A549 (cell line): ENCODE measurements at regions of chr10 and their contacts with region 1.

Region 1: GRCh38 chr10:28663576-28664313 is 13.6 kb upstream of the BAMBI start:
- DNase-seq: peak; percentile 79 to 86
- ATAC-seq: peak; percentile 87 to 92
- H3K4me3 ChIP-seq: no peak overlapping the region
- H3K27ac ChIP-seq: peak overlapping the region; percentile 47 to 67; a peak in 5 of 6 replicates
- H3K4me1 ChIP-seq: peaks cover 28% of the 10 kb centered on the region
- CTCF ChIP-seq: peak; percentile 97
- EP300 ChIP-seq: no peak
- POLR2A ChIP-seq: no peak
- RAD21 ChIP-seq: peak; percentile 99

Region 2: DNA sequence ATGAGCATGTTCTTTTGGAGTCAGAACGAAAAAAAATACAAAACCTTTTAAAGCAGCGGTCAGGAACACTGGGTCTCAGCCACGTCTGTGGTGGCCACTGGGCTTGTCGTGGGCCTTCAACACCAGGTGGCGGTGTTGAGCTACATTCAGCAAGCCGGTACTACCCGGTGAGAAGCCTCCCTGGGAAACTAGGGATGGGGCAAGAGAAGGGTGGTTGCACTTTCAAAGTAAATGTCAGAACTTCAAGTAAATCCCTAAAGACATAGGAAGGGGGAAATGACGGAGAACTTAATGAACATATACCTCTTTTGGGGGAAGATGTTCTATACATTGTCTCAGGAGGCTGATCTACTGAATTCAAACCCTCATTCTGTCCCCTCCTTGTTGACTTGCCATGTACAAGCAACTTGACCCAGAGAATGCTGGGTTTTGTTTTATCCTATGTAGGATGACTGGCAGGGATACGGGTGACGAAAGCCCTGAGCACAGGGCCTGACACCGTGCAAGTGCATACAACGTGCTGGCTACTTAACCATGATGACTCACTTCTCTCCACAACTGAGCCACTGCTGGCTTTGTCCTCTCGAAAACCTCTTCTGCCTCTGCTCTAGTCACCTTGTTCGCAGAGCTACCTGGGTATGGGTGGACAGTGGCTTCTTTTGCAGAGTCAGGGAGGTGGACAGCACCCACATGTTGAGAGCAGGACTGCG is 35.4 kb before region 1 on chr10:
- CTCF ChIA-PET with region 1: interaction called, 14 read pairs
- POLR2A ChIA-PET with region 1: no interaction called
- DNase-seq: peak; percentile 80 to 84
- ATAC-seq: peak; percentile 89 to 92
- H3K4me3 ChIP-seq: no peak overlapping the region
- H3K27ac ChIP-seq: peak overlapping the region; percentile 26 to 55; a peak in 5 of 6 replicates
- H3K4me1 ChIP-seq: peaks cover 19% of the 10 kb centered on the region
- CTCF ChIP-seq: peak; percentile 96
- EP300 ChIP-seq: no peak
- POLR2A ChIP-seq: no peak
- RAD21 ChIP-seq: peak; percentile 92 to 97

Region 3: GRCh38 chr10:28652696-28653095 is 11.0 kb before region 1 on chr10:
- CTCF ChIA-PET with region 1: interaction called, 17 read pairs
- POLR2A ChIA-PET with region 1: no interaction called
- DNase-seq: no peak
- ATAC-seq: peak in 1 of 2 experiments; percentile 38; a peak in 1 of 6 replicates
- H3K4me3 ChIP-seq: no peak overlapping the region
- H3K27ac ChIP-seq: no peak overlapping the region
- H3K4me1 ChIP-seq: no peaks in the 10 kb centered on the region
- CTCF ChIP-seq: no peak
- EP300 ChIP-seq: no peak
- POLR2A ChIP-seq: no peak
- RAD21 ChIP-seq: no peak

Region 4: GRCh38 chr10:28984431-28984830 is 320.7 kb after region 1 on chr10:
- CTCF ChIA-PET with region 1: interaction called, 15 read pairs
- POLR2A ChIA-PET with region 1: no interaction called
- DNase-seq: peak; percentile 55 to 76
- ATAC-seq: peak; percentile 94 to 96
- H3K4me3 ChIP-seq: no peak overlapping the region
- H3K27ac ChIP-seq: peak overlapping the region; percentile 63 to 73
- H3K4me1 ChIP-seq: peaks cover 24% of the 10 kb centered on the region
- CTCF ChIP-seq: no peak
- EP300 ChIP-seq: no peak
- POLR2A ChIP-seq: no peak
- RAD21 ChIP-seq: peak; percentile 1 to 38; a peak in 2 of 5 replicates

Region 5: DNA sequence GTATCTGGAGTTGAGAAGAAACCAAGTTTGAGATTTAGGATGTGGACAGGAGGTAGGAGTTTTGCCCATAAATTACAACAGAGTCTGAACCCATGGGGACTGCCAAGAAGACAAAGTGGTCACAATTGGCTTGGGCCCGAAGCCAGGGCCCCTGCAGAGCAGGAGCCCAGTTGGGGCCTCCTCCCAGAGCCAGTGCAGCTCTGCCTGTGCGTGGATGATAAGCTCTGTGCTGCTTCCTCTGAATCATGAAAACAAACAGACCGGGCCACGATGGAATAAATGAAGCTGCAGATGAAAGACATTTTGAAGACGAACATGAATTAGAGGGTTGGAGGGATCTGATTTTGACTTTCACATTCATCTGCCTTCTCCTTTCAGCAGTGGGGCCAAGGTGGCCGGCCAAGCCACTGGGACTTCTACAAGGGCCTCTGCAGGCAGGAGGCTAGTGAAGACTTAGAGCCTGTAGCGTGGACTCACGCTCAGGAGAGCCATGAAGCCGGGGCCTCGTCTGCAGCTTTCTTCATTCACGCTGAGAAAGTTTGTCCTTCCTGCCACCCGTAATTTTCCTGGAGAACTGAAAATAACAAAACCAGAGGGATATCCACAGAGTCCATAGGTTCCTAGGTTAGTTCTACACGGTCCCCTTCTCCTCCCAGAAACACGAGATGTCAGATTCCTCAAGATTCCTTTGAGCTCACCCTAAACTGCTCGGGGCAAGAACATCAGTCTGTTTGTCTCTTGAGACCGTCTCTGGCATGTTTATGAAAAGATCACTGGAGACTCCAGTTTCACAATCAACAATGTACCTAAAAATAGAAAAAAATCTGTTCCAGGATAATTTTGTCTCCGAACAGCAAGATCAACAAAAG is 468.4 kb after region 1 on chr10:
- CTCF ChIA-PET with region 1: interaction called, 20 read pairs
- POLR2A ChIA-PET with region 1: no interaction called
- DNase-seq: no peak
- ATAC-seq: peak in 1 of 2 experiments; percentile 61; a peak in 3 of 6 replicates
- H3K4me3 ChIP-seq: no peak overlapping the region
- H3K27ac ChIP-seq: peak overlapping the region; percentile 37 to 73
- H3K4me1 ChIP-seq: peaks cover 19% of the 10 kb centered on the region
- CTCF ChIP-seq: no peak
- EP300 ChIP-seq: no peak
- POLR2A ChIP-seq: no peak
- RAD21 ChIP-seq: no peak

Region 6: GRCh38 chr10:29317027-29317420 is 653.3 kb after region 1 on chr10:
- CTCF ChIA-PET with region 1: interaction called, 19 read pairs
- POLR2A ChIA-PET with region 1: interaction called, 4 read pairs
- DNase-seq: no peak
- ATAC-seq: no peak
- H3K4me3 ChIP-seq: no peak overlapping the region
- H3K27ac ChIP-seq: peak overlapping the region; percentile 10 to 82; a peak in 5 of 6 replicates
- H3K4me1 ChIP-seq: peaks cover 57% of the 10 kb centered on the region
- CTCF ChIP-seq: no peak
- EP300 ChIP-seq: no peak
- POLR2A ChIP-seq: no peak
- RAD21 ChIP-seq: no peak